A673 (cell line): ENCODE measurements at regions of chr9 and their contacts with region 1.

Region 1: GRCh38 chr9:110777196-110777875 is 108.7 kb downstream of the MUSK start:
- DNase-seq: peak; percentile 94
- H3K4me3 ChIP-seq: peak overlapping the region; percentile 4
- H3K27ac ChIP-seq: peak overlapping the region; percentile 75
- H3K4me1 ChIP-seq: peaks cover 36% of the 10 kb centered on the region
- H3K27me3 ChIP-seq: no peaks in the 10 kb centered on the region
- CTCF ChIP-seq: no peak

Region 2: GRCh38 chr9:110919609-110920008 is 142.3 kb after region 1 on chr9:
- CTCF ChIA-PET with region 1: no interaction called
- POLR2A ChIA-PET with region 1: no interaction called
- intact Hi-C with region 1: no loop called
- DNase-seq: peak; percentile 60
- H3K4me3 ChIP-seq: no peak overlapping the region
- H3K27ac ChIP-seq: peak overlapping the region; percentile 56
- H3K4me1 ChIP-seq: peaks cover 49% of the 10 kb centered on the region
- H3K27me3 ChIP-seq: no peaks in the 10 kb centered on the region
- CTCF ChIP-seq: no peak

Region 3: DNA sequence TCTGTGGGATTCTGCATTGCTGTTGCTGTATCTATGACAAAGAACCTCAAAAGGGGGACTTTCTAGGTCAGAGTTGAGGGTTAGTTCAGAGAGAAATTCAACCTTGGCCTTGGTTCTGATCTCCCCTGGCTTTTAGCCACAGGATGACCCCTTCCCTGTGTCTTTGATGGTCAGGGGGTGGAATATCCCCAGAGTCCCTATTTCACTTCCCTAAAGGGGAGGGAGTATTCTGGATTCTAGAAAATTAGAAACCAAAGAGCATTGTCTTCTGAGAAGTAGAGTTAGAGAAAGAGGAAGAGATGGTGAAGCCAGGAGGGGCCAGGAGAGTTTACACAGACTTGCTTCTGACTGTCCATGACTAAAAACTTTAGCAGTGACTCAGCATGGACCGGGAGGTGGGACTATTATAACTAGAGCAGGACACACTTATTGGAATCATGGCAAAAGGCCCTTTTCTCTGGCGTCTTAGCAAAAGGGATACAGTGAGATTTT is 317.1 kb after region 1 on chr9:
- CTCF ChIA-PET with region 1: no interaction called
- POLR2A ChIA-PET with region 1: interaction called, 10 read pairs
- intact Hi-C with region 1: no loop called
- DNase-seq: peak; percentile 35
- H3K4me3 ChIP-seq: no peak overlapping the region
- H3K27ac ChIP-seq: no peak overlapping the region
- H3K4me1 ChIP-seq: peaks cover 12% of the 10 kb centered on the region
- H3K27me3 ChIP-seq: no peaks in the 10 kb centered on the region
- CTCF ChIP-seq: no peak